Activated CD8-positive, alpha-beta T cell treated with anti-CD3 and anti-CD28 coated beads for 36 hours (primary cell): ENCODE measurements at regions of chr13 and their contacts with region 1.

Region 1: DNA sequence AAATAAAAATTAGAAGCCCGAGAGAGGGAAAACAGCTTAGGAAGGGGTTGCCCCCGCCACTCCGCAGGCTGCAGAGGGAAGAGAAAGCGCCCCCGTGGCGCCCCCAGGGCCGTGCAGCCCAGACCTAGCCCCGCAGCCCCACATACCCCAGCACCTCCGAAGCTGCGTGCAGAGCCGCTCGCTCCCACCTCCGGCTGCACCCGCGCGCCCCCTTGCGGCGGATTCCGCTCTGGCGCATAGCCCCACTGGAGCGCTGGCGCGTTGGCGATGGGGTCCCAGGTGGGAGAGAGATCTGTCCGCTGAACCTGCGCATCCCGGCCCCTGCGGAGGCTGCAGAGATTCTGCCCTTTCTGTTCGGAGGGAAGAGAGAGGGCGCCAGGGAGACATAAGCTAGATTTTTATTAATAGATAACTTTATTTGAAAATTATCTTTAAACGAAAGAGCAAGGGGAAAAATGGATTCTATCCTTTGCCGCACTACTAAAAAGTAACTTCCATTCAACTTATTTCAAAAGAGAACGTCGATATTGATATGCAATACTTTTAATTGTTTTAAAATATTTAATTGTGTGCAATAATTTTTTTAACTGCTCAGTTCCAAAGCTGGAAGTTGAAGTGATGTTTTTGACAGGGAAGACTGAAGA is 11.7 kb upstream of the CLN5 start:
- DNase-seq: peak; percentile 89
- ATAC-seq: peak; percentile 100
- H3K4me3 Mint-ChIP-seq: peak overlapping the region; percentile 58
- H3K27ac Mint-ChIP-seq: no peak overlapping the region
- H3K4me1 Mint-ChIP-seq: peaks cover 8% of the 10 kb centered on the region
- H3K27me3 Mint-ChIP-seq: peaks cover 28% of the 10 kb centered on the region
- CTCF ChIP-seq: peak; percentile 95

Region 2: DNA sequence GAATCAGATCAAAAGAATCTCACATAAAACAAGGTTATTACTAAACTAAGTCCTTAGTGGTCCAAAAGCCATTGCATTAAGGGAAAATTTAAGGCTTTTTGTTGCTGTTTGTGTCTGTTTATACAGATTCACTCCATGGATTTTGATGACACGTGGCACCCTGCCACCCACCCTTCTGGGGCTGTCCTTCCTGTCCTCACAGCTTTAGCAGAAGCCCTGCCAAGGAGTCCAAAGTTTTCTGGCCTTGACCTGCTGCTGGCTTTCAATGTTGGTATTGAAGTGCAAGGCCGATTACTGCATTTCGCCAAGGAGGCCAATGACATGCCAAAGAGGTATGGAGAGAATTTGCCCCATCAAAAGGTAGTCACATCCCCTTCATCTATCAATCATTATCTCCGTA is 25.0 kb before region 1 on chr13:
- CTCF ChIA-PET with region 1: interaction called, 14 read pairs
- POLR2A ChIA-PET with region 1: no interaction called
- intact Hi-C with region 1: no loop called
- DNase-seq: no peak
- ATAC-seq: no peak
- H3K4me3 Mint-ChIP-seq: no peak overlapping the region
- H3K27ac Mint-ChIP-seq: no peak overlapping the region
- H3K4me1 Mint-ChIP-seq: no peaks in the 10 kb centered on the region
- H3K27me3 Mint-ChIP-seq: peaks cover 15% of the 10 kb centered on the region
- CTCF ChIP-seq: no peak

Region 3: GRCh38 chr13:77002590-77003190 is 22.5 kb after region 1 on chr13:
- CTCF ChIA-PET with region 1: interaction called, 17 read pairs
- POLR2A ChIA-PET with region 1: interaction called, 4 read pairs
- intact Hi-C with region 1: no loop called
- DNase-seq: no peak
- ATAC-seq: no peak
- H3K4me3 Mint-ChIP-seq: no peak overlapping the region
- H3K27ac Mint-ChIP-seq: no peak overlapping the region
- H3K4me1 Mint-ChIP-seq: peaks cover 34% of the 10 kb centered on the region
- H3K27me3 Mint-ChIP-seq: no peaks in the 10 kb centered on the region
- CTCF ChIP-seq: peak; percentile 58